A673 (cell line): ENCODE measurements at regions of chr3 and their contacts with region 1.

Region 1: DNA sequence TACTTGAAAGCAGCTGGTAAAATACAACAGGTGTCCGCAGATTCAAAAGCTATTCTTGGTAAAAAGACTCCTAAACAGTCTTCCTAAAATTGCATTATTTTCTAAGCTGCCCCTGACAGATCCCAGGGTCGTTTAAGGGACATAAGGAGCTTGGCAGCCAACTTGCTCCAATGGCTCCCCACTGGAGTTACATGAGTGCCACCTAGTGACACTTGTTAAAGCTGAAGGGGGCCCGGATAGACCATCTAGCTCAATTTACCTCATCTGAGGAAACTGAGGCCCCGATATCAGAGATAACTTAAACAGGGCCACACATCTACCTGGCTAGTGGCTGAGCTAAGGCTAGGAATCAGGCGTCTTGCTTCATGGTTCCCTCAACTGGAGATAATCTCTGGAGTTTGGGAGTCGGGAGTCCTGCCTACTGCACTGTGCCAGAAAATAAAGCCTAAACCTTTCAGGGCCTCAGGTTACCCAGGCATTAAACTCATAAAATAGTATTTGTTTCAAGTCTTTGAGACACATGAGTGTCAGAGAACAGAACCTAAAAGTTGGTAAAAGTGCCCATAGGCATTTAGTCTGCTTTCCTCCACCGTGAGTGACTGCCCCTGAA is 6.5 kb upstream of the TBC1D23 start:
- DNase-seq: peak; percentile 83
- H3K4me3 ChIP-seq: no peak overlapping the region
- H3K27ac ChIP-seq: no peak overlapping the region
- H3K4me1 ChIP-seq: peaks cover 18% of the 10 kb centered on the region
- H3K27me3 ChIP-seq: no peaks in the 10 kb centered on the region
- CTCF ChIP-seq: peak; percentile 92

Region 2: GRCh38 chr3:99699841-99700240 is 554.4 kb before region 1 on chr3:
- CTCF ChIA-PET with region 1: no interaction called
- POLR2A ChIA-PET with region 1: no interaction called
- intact Hi-C with region 1: loop called (anchors 10 kb)
- DNase-seq: peak; percentile 64
- H3K4me3 ChIP-seq: no peak overlapping the region
- H3K27ac ChIP-seq: no peak overlapping the region
- H3K4me1 ChIP-seq: peaks cover 5% of the 10 kb centered on the region
- H3K27me3 ChIP-seq: no peaks in the 10 kb centered on the region
- CTCF ChIP-seq: no peak

Region 3: GRCh38 chr3:99833617-99834205 is 420.6 kb before region 1 on chr3:
- CTCF ChIA-PET with region 1: interaction called, 27 read pairs
- POLR2A ChIA-PET with region 1: interaction called, 7 read pairs
- intact Hi-C with region 1: loop called (anchors 5 kb)
- DNase-seq: no peak
- H3K4me3 ChIP-seq: no peak overlapping the region
- H3K27ac ChIP-seq: no peak overlapping the region
- H3K4me1 ChIP-seq: peaks cover 15% of the 10 kb centered on the region
- H3K27me3 ChIP-seq: no peaks in the 10 kb centered on the region
- CTCF ChIP-seq: no peak

Region 4: DNA sequence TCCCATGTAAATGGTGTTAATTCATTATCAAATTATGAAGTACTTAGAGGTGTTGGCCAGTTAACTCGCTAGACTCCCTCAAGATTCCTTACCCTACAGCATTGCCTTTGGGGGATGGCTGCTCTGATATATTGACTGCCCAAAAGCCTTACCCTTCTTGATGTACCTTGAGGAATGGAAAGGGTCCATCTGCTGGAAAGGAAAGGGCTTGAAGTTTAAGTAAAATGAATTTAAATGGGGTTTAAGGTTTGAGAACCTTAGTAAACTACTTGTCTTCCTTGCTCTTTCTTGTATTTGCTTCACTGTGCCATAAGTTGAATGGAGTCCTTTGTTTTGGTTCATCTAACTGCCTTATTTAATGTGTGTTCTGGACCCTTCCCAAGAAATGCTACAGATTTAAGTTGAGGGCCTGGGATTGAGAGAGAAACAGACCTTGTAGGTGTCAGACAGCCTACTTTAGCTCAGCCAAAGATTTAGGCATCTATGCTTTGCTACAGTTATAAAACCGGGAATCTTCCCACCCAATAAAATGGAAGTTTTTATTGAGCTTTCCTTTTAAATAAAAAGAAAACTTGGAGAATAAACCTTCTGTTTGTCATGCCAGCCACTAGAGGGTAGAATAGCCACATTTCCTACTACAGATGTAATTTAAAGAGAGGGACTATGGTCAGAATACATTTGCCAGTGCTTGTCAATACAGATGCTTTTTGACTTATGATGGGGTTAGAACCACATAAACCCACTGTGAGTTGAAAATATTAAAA is 411.3 kb before region 1 on chr3:
- CTCF ChIA-PET with region 1: interaction called, 32 read pairs
- POLR2A ChIA-PET with region 1: no interaction called
- intact Hi-C with region 1: no loop called
- DNase-seq: peak; percentile 65
- H3K4me3 ChIP-seq: no peak overlapping the region
- H3K27ac ChIP-seq: no peak overlapping the region
- H3K4me1 ChIP-seq: peaks cover 32% of the 10 kb centered on the region
- H3K27me3 ChIP-seq: no peaks in the 10 kb centered on the region
- CTCF ChIP-seq: peak; percentile 79

Region 5: DNA sequence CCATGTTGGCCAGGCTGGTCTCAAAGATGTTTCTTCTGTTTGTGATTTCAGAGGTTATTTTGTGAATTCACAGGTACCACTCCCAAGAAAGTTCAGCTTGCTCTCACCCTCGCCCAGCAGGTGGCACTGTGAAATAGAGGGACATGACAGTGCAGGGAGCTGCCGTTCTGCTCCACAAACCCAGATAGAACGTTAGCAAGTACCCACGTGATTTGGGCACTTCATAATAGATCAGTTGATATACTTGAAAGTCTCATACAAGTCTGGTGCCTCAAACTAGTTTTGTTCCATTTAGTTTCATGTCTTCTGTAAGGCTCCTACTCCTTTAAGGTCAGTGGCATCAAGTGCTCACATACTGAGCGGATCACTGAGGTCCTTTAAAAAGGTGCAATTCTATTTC is 185.4 kb before region 1 on chr3:
- CTCF ChIA-PET with region 1: interaction called, 27 read pairs
- POLR2A ChIA-PET with region 1: no interaction called
- intact Hi-C with region 1: loop called (anchors 1 kb)
- DNase-seq: peak; percentile 87
- H3K4me3 ChIP-seq: no peak overlapping the region
- H3K27ac ChIP-seq: no peak overlapping the region
- H3K4me1 ChIP-seq: peaks cover 22% of the 10 kb centered on the region
- H3K27me3 ChIP-seq: no peaks in the 10 kb centered on the region
- CTCF ChIP-seq: peak; percentile 79

Region 6: DNA sequence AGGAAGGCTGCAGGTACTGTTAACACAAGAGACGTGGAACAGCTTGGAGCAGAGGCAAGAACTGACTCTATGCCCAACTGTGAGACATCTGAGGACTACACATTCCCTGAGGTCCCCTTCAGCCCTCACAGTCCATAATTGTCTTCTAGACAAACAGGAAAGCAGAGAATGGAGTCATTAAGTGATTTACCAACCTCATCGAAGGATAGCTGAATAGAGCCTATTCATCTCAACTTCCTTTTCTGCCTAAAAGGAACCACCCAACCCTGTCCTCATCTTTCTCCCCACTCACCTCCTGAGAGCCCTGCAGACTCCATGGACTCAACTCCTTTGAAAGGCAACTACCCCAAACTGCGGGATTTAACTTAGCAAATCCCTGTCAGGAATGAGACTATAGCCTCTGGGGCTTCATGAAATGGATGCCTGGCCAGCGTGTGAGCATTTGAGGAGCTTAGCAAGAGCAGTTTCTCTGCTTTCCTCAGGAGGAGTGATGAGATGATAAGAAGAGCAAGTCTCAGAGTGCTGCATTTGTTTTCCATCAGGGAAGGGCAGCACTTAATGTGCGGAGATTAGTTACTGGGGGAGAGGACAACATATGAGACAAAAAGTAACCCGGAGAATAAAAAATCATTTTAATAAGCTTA is 78.5 kb before region 1 on chr3:
- CTCF ChIA-PET with region 1: no interaction called
- POLR2A ChIA-PET with region 1: interaction called, 10 read pairs
- intact Hi-C with region 1: no loop called
- DNase-seq: peak; percentile 68
- H3K4me3 ChIP-seq: no peak overlapping the region
- H3K27ac ChIP-seq: no peak overlapping the region
- H3K4me1 ChIP-seq: peaks cover 10% of the 10 kb centered on the region
- H3K27me3 ChIP-seq: no peaks in the 10 kb centered on the region
- CTCF ChIP-seq: no peak